ENCODE measurements at regions of chr6 and their contacts with region 1.

Region 1: DNA sequence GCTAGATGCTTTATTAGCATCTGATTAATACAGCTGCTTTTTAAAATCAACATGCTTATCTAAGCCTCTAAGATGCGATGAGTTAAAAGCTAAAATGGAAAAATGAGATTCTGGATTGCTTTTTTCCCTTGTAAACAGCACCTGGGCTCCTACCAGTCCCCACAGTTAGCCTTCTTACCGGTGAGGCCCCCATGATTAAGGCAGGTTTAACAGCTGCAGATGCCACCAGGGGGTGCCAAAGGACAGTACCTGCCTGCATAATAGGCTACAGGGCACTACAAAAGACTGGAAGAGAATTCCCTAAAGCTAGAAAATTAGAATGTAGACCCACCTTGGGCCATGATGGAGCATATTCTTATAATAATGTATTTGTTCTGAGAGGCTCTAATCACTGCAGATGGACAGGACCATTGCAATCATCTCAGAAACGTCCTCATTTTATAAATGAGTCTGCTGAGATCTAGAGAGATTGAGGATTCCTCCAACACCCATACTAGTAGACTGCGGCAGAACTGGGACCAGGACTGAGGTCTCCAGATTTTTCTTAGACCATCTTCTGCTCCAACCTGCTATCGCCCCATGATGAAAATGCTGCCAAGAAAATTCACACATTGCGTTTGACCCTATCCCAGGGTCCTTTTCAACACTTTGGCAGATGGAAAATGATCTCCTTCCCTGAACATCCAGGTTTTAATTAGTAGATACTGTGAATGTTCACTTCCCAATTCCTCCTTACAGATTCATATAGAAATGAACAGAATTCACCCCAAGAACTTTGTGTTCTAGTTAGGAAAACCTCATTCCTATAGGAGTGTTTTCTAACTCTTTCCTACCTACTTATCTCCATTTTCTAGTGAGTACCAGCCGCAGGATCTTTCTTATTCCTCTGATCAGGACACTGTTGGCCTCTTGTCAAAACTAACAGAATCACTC is 148.8 kb downstream of the RPS12 start:
- H3K4me3 ChIP-seq: no peak overlapping the region
- H3K27ac ChIP-seq: no peak overlapping the region
- H3K4me1 ChIP-seq: peaks cover 19% of the 10 kb centered on the region
- CTCF ChIP-seq: peak; percentile 70; the same call in 1 of the 2 replicates

Region 2: GRCh38 chr6:132830334-132830751 is 132.9 kb before region 1 on chr6:
- CTCF ChIA-PET with region 1: interaction called, 55 read pairs
- POLR2A ChIA-PET with region 1: no interaction called
- H3K4me3 ChIP-seq: no peak overlapping the region
- H3K27ac ChIP-seq: no peak overlapping the region
- H3K4me1 ChIP-seq: no peaks in the 10 kb centered on the region
- CTCF ChIP-seq: peak; percentile 46; the same call in 1 of the 2 replicates

Region 3: DNA sequence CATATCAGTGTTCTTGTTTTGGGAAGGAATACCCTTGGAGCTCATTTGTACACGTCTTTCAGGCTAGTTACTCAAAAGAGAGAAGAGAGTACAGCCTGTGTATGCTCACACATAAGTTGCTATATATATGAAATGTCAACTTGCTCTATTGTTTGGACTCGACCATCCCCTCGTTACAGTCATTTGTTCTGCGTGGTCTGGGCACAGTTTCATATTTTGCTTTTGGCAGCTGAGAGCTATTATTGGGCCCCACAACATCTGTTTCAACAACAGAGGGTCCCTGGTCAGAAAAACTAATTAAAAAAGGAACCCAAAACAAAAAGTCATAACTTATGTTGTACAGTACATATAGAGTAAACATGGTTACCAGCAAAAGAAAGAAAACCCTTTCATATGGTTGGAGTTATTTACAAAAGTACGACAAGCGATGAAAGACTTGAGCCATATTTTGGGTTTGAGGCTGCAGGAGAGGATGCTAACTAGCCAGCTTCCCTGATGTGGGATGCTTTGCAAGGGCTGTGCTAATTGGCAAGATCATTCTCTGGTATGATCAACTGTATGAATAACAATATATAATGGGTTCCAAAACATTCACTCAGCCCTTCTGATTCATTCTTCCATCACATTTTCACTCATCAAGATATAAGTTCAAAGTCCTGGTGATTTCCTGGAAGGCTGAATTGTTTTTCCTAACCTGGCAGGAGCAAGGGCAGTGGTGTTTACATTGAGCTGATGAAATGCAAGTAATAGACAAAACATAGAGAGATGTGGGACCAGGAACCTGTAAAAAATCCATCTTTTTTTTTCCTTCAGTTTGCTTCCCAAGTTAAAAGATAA is 11.0 kb before region 1 on chr6:
- CTCF ChIA-PET with region 1: interaction called, 36 read pairs
- POLR2A ChIA-PET with region 1: no interaction called
- H3K4me3 ChIP-seq: no peak overlapping the region
- H3K27ac ChIP-seq: no peak overlapping the region
- H3K4me1 ChIP-seq: no peaks in the 10 kb centered on the region
- CTCF ChIP-seq: no peak

Region 4: GRCh38 chr6:133040094-133040802 is 77.0 kb after region 1 on chr6:
- CTCF ChIA-PET with region 1: interaction called, 51 read pairs
- POLR2A ChIA-PET with region 1: no interaction called
- H3K4me3 ChIP-seq: no peak overlapping the region
- H3K27ac ChIP-seq: no peak overlapping the region
- H3K4me1 ChIP-seq: peaks cover 6% of the 10 kb centered on the region; the same call in 1 of the 2 replicates
- CTCF ChIP-seq: peak; percentile 42; the same call in 1 of the 2 replicates

Region 5: DNA sequence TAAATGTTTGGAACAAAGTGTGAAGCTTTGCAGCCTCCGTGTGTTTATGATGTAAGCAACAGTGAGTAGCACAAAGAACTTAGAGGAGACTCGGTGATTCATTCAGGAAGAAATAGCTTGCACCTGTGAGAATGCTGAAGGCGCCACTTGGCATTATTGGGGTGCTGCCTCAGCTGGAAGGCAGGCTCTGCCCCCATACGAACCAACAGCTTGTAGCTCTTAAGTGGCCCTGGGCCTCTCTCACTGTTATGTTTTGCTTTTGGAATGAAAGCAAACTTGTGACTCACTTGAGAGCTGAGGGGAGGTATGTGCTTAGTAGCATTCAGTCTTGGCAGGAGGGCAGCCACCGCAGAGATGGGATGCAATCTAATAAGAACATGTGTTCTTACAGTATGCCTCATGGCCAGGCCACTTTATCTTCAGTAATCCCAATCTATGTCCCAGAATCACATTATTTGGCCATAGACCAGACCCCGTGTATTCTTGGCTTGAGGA is 588.7 kb after region 1 on chr6:
- CTCF ChIA-PET with region 1: interaction called, 27 read pairs
- POLR2A ChIA-PET with region 1: no interaction called
- H3K4me3 ChIP-seq: no peak overlapping the region
- H3K27ac ChIP-seq: no peak overlapping the region
- H3K4me1 ChIP-seq: no peaks in the 10 kb centered on the region
- CTCF ChIP-seq: no peak